ENCODE measurements at regions of chr10 and their contacts with region 1.

Region 1: GRCh38 chr10:80055760-80056159 is 22.7 kb upstream of the TMEM254 start:
- DNase-seq: no peak
- ATAC-seq: no peak
- H3K4me3 ChIP-seq: no peak overlapping the region
- H3K27ac ChIP-seq: no peak overlapping the region
- H3K4me1 ChIP-seq: no peaks in the 10 kb centered on the region
- H3K27me3 ChIP-seq: no peaks in the 10 kb centered on the region
- CTCF ChIP-seq: no peak
- POLR2A ChIP-seq: no peak

Region 2: DNA sequence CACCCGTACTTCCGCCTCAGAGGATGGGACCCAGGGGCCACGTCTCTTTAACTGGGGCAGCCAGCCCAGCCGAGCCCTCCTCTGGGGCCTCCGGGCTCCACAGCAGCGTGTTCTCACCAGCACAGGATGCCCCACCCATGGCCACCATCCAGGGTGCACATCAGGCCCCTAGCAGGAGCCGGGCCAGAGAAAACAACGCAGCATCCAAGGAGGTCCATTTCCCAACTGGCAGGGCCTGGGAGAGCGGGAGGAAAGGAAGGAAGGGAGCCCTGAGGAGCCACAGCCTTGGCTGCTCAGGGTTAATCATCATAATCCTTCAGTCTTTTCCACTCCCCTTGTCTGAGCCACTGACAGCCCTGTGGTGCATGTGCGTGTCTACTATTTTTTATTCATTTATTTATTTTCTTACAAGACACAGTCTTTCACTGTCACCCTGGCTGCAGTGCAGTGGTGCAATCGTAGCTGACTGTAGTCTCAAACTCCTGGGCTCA is 80.4 kb after region 1 on chr10:
- in situ Hi-C with region 1: no loop called
- intact Hi-C with region 1: loop called (anchors 5 kb)
- DNase-seq: peak; percentile 62 to 87
- ATAC-seq: peak; percentile 55 to 56
- H3K4me3 ChIP-seq: no peak overlapping the region
- H3K27ac ChIP-seq: peak overlapping the region; percentile 62 to 83 (median 65)
- H3K4me1 ChIP-seq: peaks cover 0 to 20% of the 10 kb centered on the region in 2 donors
- H3K27me3 ChIP-seq: peaks cover 0 to 21% (median 18%) of the 10 kb centered on the region in 3 donors
- CTCF ChIP-seq: no peak
- POLR2A ChIP-seq: no peak

Measured in gastrocnemius medialis (tissue), 4 donors.